ENCODE measurements at regions of chr12 and their contacts with region 1.

Region 1: DNA sequence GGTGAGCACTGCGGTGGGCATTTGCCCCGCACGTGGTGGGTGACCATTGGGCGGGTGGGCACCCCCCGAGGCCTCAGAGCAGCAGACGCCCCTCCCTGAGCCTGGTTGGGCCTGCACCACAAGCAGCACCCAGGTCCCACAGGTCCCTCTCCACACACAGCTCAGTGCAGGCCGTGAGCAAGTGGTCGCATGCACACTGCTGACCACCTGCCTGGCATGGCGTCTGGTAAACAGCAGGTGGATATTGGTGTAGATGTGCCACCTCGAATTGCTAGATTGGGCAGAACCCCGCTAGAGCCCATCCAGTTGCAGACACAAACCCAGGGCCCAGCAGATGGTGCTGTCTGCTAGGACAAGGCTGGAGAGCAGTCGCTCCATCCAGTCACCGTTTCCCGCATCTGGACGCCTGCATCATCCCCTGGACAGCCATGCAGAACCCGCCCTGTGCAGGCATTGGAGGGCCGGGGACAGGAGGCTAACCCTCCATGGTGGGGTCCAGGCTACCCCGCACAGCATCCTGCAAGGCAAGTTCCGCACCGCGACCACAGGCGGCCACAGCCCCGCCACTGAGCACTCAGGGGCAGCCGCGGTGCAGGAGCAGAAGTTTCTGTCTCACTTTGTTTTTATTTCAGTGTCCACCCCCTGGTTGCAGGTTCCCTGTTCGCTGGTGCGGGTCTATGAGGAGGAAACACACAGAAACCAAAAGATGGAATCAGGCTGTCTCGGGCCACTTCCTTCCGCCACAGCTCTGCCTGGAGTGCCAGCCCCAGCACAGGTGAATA is 45.6 kb upstream of the RIMBP2 start:
- DNase-seq: peak; percentile 92
- ATAC-seq: peak; percentile 96
- H3K4me3 ChIP-seq: peak overlapping the region; percentile 67
- H3K27ac ChIP-seq: no peak overlapping the region
- H3K4me1 ChIP-seq: peaks cover 8% of the 10 kb centered on the region; the same call in 1 of the 2 replicates
- H3K27me3 ChIP-seq: peaks cover 3% of the 10 kb centered on the region; the same call in 1 of the 2 replicates
- CTCF ChIP-seq: peak; percentile 98

Region 2: DNA sequence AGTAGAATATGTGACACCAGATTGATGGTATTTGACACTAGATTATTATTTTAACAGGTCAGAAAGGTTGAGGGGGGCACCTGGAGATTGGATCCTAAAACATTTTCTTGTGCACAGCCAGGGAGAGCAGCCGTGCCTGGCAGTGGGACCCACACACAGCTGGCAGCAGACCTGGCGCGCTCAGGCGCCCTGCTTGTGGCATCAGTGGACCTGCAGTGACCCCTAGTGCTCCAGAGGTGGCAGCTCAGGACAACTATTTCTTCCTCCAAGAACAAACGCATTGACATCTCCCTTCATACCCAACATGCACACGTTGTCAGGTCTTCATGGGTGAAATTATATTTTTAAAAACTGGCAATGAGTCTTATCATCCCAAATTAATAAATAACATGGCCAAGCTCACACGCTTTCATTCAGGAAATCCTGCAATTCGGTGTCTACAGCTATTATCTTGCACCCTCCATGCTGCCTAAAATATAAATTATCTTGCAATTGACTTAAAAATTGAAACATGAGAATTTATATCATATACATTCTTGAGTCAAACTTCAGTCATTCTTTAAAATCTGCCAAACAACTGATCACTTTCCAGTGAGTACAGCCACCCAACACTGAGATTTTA is 850.2 kb before region 1 on chr12:
- CTCF ChIA-PET with region 1: no interaction called
- POLR2A ChIA-PET with region 1: no interaction called
- intact Hi-C with region 1: loop called (anchors 5 kb)
- DNase-seq: peak; percentile 40
- ATAC-seq: peak; percentile 43; the same call in 1 of the 2 replicates
- H3K4me3 ChIP-seq: no peak overlapping the region
- H3K27ac ChIP-seq: no peak overlapping the region
- H3K4me1 ChIP-seq: no peaks in the 10 kb centered on the region
- H3K27me3 ChIP-seq: no peaks in the 10 kb centered on the region
- CTCF ChIP-seq: peak; percentile 70

Region 3: GRCh38 chr12:130702966-130703732 is 58.6 kb before region 1 on chr12:
- CTCF ChIA-PET with region 1: no interaction called
- POLR2A ChIA-PET with region 1: no interaction called
- intact Hi-C with region 1: no loop called
- DNase-seq: no peak
- ATAC-seq: no peak
- H3K4me3 ChIP-seq: no peak overlapping the region
- H3K27ac ChIP-seq: no peak overlapping the region
- H3K4me1 ChIP-seq: no peaks in the 10 kb centered on the region
- H3K27me3 ChIP-seq: no peaks in the 10 kb centered on the region
- CTCF ChIP-seq: no peak

Region 4: DNA sequence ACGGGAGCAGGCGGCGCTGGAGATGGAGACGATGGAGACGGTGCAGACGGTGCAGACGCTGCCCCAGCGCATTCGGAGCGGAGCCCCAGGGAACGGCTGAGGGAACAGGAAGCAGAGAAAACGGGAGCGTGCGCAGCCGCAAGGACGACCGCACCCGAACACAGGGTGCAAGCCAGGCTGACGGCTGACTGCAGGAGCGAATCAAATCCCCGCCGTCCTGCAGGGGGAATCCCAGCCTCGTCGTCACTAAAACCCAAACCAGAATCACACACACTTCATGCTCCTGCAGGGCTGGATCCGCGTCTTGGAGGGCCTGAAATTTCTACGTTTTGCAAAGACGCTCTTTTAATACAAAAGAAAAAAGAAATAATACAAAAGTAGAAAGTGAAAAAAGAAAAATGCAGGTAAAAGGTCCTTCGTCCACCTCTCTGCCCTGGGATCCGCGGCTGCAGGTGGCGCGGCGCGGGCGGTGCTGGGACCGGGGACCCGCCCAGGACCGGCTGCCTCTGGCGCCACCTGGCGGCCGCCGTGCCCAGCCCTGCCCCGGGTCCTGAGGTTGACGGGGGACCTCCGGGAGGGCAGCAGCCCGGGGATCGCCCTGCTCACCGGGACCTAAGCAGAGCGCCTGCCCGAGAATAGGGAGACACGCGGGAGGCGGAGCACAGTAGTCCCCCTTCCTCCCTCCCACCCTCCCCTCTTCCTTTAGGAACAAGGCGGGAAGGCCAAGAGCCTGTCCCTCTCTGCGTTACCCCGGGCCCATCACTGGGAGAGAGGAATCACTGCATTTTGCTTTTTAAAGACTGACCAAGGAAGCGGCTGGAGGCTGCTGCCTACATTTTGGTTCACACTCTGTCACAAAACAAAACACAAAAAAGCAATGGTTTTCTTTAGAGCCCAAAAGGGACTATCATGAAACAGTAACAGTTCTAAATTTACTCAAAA is 57.2 kb after region 1 on chr12:
- CTCF ChIA-PET with region 1: no interaction called
- POLR2A ChIA-PET with region 1: no interaction called
- intact Hi-C with region 1: loop called (anchors 1 kb)
- DNase-seq: peak; percentile 87
- ATAC-seq: peak; percentile 97
- H3K4me3 ChIP-seq: peak overlapping the region; percentile 64
- H3K27ac ChIP-seq: peak overlapping the region; percentile 60
- H3K4me1 ChIP-seq: peaks cover 11% of the 10 kb centered on the region; the same call in 1 of the 2 replicates
- H3K27me3 ChIP-seq: no peaks in the 10 kb centered on the region
- CTCF ChIP-seq: peak; percentile 93

Region 5: GRCh38 chr12:130961921-130962451 is 200.3 kb after region 1 on chr12:
- CTCF ChIA-PET with region 1: no interaction called
- POLR2A ChIA-PET with region 1: no interaction called
- intact Hi-C with region 1: no loop called
- DNase-seq: no peak
- ATAC-seq: no peak
- H3K4me3 ChIP-seq: no peak overlapping the region
- H3K27ac ChIP-seq: no peak overlapping the region
- H3K4me1 ChIP-seq: no peaks in the 10 kb centered on the region
- H3K27me3 ChIP-seq: peaks cover 92% of the 10 kb centered on the region
- CTCF ChIP-seq: no peak

Region 6: DNA sequence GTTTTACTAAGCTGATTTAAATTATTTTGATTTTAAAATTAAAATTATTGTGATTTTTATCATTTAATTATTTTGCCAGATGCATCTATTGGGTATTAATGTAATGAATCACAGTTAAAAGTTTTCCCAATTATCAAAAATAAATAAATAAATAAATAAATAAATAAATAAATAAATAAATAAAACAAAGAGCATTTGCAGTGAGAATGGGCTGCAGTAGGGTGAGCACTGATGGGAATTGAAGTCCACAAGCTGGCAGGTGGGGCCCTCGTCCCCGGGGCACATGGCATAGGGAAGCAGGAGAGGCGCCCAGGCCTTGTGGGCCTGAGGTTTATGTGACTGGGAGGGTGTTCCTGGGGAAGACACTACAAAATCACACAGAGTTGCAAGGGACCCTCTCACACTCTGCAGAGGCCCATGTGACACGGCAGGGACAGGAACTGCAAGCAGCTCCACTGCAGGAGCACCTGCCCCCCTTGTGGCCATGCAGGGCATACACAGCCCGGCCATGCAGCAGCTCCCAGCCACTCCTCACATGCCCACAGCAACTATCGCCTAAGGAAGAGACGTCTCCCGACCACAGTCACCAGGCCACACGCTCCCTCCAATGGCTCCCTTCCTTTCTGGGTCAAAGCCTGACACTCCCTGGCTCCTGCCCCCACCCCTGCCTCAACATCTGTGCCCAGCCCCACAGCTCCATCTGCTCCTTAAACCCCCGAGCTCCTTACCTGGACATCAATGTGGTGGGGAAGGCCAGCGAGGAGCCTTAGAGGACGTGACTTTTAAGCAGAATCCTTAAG is 692.9 kb after region 1 on chr12:
- CTCF ChIA-PET with region 1: no interaction called
- POLR2A ChIA-PET with region 1: no interaction called
- intact Hi-C with region 1: loop called (anchors 5 kb)
- DNase-seq: peak; percentile 74
- ATAC-seq: peak; percentile 100
- H3K4me3 ChIP-seq: no peak overlapping the region
- H3K27ac ChIP-seq: no peak overlapping the region
- H3K4me1 ChIP-seq: no peaks in the 10 kb centered on the region
- H3K27me3 ChIP-seq: peaks cover 37% of the 10 kb centered on the region
- CTCF ChIP-seq: peak; percentile 89

Measured in PC-3 (cell line).